Activated CD8-positive, alpha-beta T cell treated with anti-CD3 and anti-CD28 coated beads, Interleukin-2, amount 10 ng/mL, durations not matched to agents 7 days and 5 days (primary cell): ENCODE measurements at regions of chr7 and their contacts with region 1.

Region 1: GRCh38 chr7:23273141-23273599 is 26.0 kb upstream of the MALSU1 start:
- DNase-seq: peak; percentile 94
- ATAC-seq: peak; percentile 99
- H3K4me3 Mint-ChIP-seq: peak overlapping the region; percentile 67
- H3K27ac Mint-ChIP-seq: peak overlapping the region; percentile 33
- H3K4me1 Mint-ChIP-seq: peaks cover 15% of the 10 kb centered on the region
- H3K27me3 Mint-ChIP-seq: peaks cover 9% of the 10 kb centered on the region

Region 2: DNA sequence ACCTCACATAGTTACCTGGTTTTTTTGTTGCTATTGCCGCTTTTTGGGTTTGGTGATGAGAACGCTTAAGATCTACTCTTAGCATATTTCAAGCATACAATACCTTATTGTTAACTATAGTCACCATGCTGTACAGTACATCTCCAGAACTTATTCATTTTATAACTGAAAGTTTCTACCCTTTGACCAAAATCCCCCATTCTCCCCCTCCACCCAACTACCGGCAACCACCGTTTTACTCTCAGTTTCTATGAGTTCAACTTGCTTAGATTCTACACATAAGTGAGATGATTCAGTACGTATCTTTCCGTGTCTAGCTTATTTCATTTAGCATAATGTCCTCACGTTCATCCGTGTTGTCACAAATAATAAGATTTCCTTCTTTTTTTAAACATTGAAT is 632.9 kb before region 1 on chr7:
- CTCF ChIA-PET with region 1: no interaction called
- POLR2A ChIA-PET with region 1: no interaction called
- DNase-seq: peak; percentile 42
- ATAC-seq: no peak
- H3K4me3 Mint-ChIP-seq: no peak overlapping the region
- H3K27ac Mint-ChIP-seq: no peak overlapping the region
- H3K4me1 Mint-ChIP-seq: peaks cover 17% of the 10 kb centered on the region
- H3K27me3 Mint-ChIP-seq: peaks cover 21% of the 10 kb centered on the region

Region 3: GRCh38 chr7:23012908-23013714 is 260.1 kb before region 1 on chr7:
- CTCF ChIA-PET with region 1: no interaction called
- POLR2A ChIA-PET with region 1: no interaction called
- DNase-seq: peak; percentile 35
- ATAC-seq: no peak
- H3K4me3 Mint-ChIP-seq: no peak overlapping the region
- H3K27ac Mint-ChIP-seq: no peak overlapping the region
- H3K4me1 Mint-ChIP-seq: peaks cover 33% of the 10 kb centered on the region
- H3K27me3 Mint-ChIP-seq: no peaks in the 10 kb centered on the region

Region 4: GRCh38 chr7:23284871-23285270 is 11.7 kb after region 1 on chr7:
- CTCF ChIA-PET with region 1: interaction called, 25 read pairs
- POLR2A ChIA-PET with region 1: no interaction called
- DNase-seq: no peak
- ATAC-seq: no peak
- H3K4me3 Mint-ChIP-seq: no peak overlapping the region
- H3K27ac Mint-ChIP-seq: no peak overlapping the region
- H3K4me1 Mint-ChIP-seq: peaks cover 19% of the 10 kb centered on the region
- H3K27me3 Mint-ChIP-seq: no peaks in the 10 kb centered on the region

Region 5: GRCh38 chr7:23347682-23348180 is 74.6 kb after region 1 on chr7:
- CTCF ChIA-PET with region 1: interaction called, 56 read pairs
- POLR2A ChIA-PET with region 1: no interaction called
- DNase-seq: no peak
- ATAC-seq: no peak
- H3K4me3 Mint-ChIP-seq: no peak overlapping the region
- H3K27ac Mint-ChIP-seq: no peak overlapping the region
- H3K4me1 Mint-ChIP-seq: peaks cover 29% of the 10 kb centered on the region
- H3K27me3 Mint-ChIP-seq: peaks cover 10% of the 10 kb centered on the region

Region 6: DNA sequence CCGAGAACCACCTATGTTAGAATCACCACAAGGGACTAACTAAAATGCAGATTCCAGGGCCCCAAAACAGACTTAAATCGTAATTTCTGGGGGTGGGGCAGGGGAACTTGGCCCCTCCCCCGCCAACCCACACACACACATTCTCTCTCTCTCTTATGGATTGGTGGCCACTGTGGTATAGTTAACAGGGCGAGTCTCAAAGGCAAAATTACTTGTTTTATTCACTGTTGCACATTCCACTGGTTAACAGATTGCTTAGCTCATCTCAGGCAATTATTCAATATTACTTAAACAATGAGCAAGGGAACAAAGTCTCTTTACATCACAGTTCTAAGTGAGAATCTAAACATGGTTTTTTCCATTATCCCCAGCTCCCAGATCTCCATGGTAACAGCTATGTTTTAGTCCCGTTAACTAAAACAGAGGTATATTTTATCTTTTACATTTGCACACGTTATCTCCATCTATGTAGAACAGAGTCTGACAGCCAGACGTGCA is 158.6 kb after region 1 on chr7:
- CTCF ChIA-PET with region 1: interaction called, 22 read pairs
- POLR2A ChIA-PET with region 1: no interaction called
- DNase-seq: no peak
- ATAC-seq: no peak
- H3K4me3 Mint-ChIP-seq: no peak overlapping the region
- H3K27ac Mint-ChIP-seq: no peak overlapping the region
- H3K4me1 Mint-ChIP-seq: no peaks in the 10 kb centered on the region
- H3K27me3 Mint-ChIP-seq: peaks cover 17% of the 10 kb centered on the region

Region 7: DNA sequence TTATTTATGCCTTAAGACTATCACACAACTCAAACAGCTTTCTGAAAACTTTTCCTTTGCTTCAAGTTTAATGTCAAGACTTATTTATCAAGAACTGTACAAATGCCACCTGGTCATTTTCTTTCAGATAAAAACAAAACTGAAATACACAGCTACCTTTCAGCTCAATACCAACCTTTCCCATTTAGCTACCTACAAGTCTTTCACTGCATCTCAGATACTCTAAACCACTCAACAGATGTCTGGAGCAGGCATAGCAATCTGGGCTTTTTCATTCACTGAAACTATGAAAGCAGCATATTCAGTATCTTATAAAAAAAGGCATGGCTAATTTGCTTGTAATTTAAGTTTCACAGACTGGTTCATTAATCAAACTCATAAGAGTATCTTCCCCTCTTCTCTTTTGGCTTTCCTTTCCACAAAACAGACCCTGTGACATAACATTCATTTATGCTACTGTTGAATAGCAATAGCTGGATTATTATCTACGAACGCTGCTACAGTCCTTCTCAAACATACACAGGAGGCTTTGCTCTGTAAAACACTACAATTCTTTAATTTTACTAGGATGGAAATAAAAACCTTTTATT is 250.4 kb after region 1 on chr7:
- CTCF ChIA-PET with region 1: interaction called, 18 read pairs
- POLR2A ChIA-PET with region 1: interaction called, 3 read pairs
- DNase-seq: no peak
- ATAC-seq: no peak
- H3K4me3 Mint-ChIP-seq: no peak overlapping the region
- H3K27ac Mint-ChIP-seq: no peak overlapping the region
- H3K4me1 Mint-ChIP-seq: peaks cover 51% of the 10 kb centered on the region
- H3K27me3 Mint-ChIP-seq: no peaks in the 10 kb centered on the region